Adrenal gland (tissue), 19 donors: ENCODE measurements at regions of chr2 and their contacts with region 1.

Region 1: GRCh38 chr2:9142551-9143263 is 63.9 kb upstream of the ASAP2 start:
- DNase-seq: peak; percentile 76 to 88 (median 83)
- H3K4me3 ChIP-seq: peak overlapping the region in 1 of 4 donors; percentile 18
- H3K27ac ChIP-seq: peak overlapping the region in 1 of 5 donors; percentile 24
- H3K4me1 ChIP-seq: peaks cover 0 to 6% of the 10 kb centered on the region in 2 donors
- H3K27me3 ChIP-seq: no peaks in the 10 kb centered on the region
- CTCF ChIP-seq: peak; percentile 94 to 100 (median 98)
- POLR2A ChIP-seq: no peak

Region 2: GRCh38 chr2:8872821-8873432 is 269.8 kb before region 1 on chr2:
- intact Hi-C with region 1: loop called (anchors 5 to 10 kb)
- DNase-seq: peak in 2 of 7 donors; percentile 12 to 15
- H3K4me3 ChIP-seq: no peak overlapping the region
- H3K27ac ChIP-seq: no peak overlapping the region
- H3K4me1 ChIP-seq: no peaks in the 10 kb centered on the region
- H3K27me3 ChIP-seq: no peaks in the 10 kb centered on the region
- CTCF ChIP-seq: peak; percentile 32 to 68 (median 54)
- POLR2A ChIP-seq: no peak

Region 3: GRCh38 chr2:8927510-8928455 is 214.9 kb before region 1 on chr2:
- intact Hi-C with region 1: no loop called
- DNase-seq: no peak
- H3K4me3 ChIP-seq: no peak overlapping the region
- H3K27ac ChIP-seq: no peak overlapping the region
- H3K4me1 ChIP-seq: no peaks in the 10 kb centered on the region
- H3K27me3 ChIP-seq: no peaks in the 10 kb centered on the region
- CTCF ChIP-seq: no peak
- POLR2A ChIP-seq: no peak